Heart left ventricle (tissue), 16 donors: ENCODE measurements at regions of chr11 and their contacts with region 1.

Region 1: GRCh38 chr11:75142714-75143419 is 8.0 kb upstream of the SLCO2B1 start:
- DNase-seq: peak; percentile 75 to 88 (median 87)
- ATAC-seq: peak; percentile 78 to 95 (median 92)
- H3K4me3 ChIP-seq: no peak overlapping the region
- H3K27ac ChIP-seq: peak overlapping the region in 6 of 12 donors; percentile 15 to 83 (median 52)
- H3K4me1 ChIP-seq: peaks cover 0 to 52% (median 16%) of the 10 kb centered on the region in 12 donors
- H3K27me3 ChIP-seq: peaks cover 0 to 15% (median 0%) of the 10 kb centered on the region in 9 donors
- CTCF ChIP-seq: peak in 1 of 12 donors; percentile 9
- POLR2A ChIP-seq: no peak

Region 2: GRCh38 chr11:74929431-74930363 is 213.2 kb before region 1 on chr11:
- intact Hi-C with region 1: loop called in 6 of 10 experiments (anchors 5 to 10 kb)
- DNase-seq: peak in 4 of 5 donors; percentile 52 to 76 (median 61)
- ATAC-seq: peak; percentile 71 to 90 (median 88)
- H3K4me3 ChIP-seq: no peak overlapping the region
- H3K27ac ChIP-seq: no peak overlapping the region
- H3K4me1 ChIP-seq: no peaks in the 10 kb centered on the region
- H3K27me3 ChIP-seq: no peaks in the 10 kb centered on the region
- CTCF ChIP-seq: peak; percentile 70 to 89 (median 82)
- POLR2A ChIP-seq: no peak

Region 3: GRCh38 chr11:74956397-74957015 is 186.4 kb before region 1 on chr11:
- intact Hi-C with region 1: no loop called
- DNase-seq: peak in 1 of 5 donors; percentile 46
- ATAC-seq: peak; percentile 65 to 89 (median 84)
- H3K4me3 ChIP-seq: no peak overlapping the region
- H3K27ac ChIP-seq: peak overlapping the region in 3 of 12 donors; percentile 27 to 58 (median 48)
- H3K4me1 ChIP-seq: peaks cover 0 to 96% (median 52%) of the 10 kb centered on the region in 12 donors
- H3K27me3 ChIP-seq: no peaks in the 10 kb centered on the region
- CTCF ChIP-seq: no peak
- POLR2A ChIP-seq: no peak

Region 4: GRCh38 chr11:75160192-75160757 is 17.4 kb after region 1 on chr11:
- intact Hi-C with region 1: loop called in 1 of 10 experiments (anchors 1 kb)
- DNase-seq: peak in 3 of 5 donors; percentile 39 to 57 (median 47)
- ATAC-seq: peak; percentile 38 to 83 (median 47)
- H3K4me3 ChIP-seq: peak overlapping the region in 1 of 12 donors; percentile 10
- H3K27ac ChIP-seq: peak overlapping the region; percentile 32 to 93 (median 71)
- H3K4me1 ChIP-seq: peaks cover 0 to 86% (median 31%) of the 10 kb centered on the region in 12 donors
- H3K27me3 ChIP-seq: no peaks in the 10 kb centered on the region
- CTCF ChIP-seq: no peak
- POLR2A ChIP-seq: no peak

Region 5: DNA sequence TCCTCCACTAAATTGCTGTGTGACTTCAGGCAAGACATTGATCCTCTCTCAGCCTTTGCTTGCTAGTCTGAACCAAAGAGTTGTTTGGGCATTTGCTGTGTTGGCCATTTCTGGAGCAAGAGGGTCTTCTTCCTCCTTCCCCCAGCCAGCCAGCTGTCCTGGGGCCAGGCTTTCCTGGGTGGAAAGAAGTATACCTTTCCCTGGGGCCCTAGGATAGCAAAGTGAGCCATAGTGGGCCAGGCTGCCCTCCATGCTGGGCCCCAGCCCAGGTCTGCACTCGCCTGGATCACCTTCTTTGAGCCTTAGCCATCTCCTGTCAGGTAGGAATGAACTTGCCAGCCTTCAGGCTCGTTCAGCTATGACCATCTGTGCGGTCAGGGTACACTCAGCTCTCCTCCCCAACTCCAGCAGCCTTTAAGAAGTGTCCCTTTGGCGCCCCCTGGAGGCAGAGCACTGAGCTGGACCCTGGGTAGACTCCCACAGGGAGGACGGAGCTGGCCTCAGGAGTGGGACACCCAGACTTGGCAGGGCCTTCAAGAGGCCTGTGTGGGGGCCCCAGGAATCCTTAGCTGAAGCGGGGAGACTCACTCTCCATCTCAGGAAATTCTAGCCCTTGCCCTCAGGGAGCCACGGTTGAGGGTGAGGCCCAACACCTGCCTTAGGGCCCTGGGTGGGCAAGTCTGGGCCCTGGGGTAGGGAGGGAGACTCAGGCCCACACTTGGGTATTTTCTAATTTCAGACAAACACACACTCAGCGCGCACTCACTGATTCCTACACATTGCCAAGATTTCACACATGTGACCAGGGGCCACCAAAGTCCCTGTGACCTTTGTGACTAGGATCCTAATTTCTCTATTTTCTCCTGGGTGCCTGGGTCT is 62.1 kb after region 1 on chr11:
- intact Hi-C with region 1: loop called (anchors 1 to 2 kb)
- DNase-seq: peak; percentile 87 to 94 (median 88)
- ATAC-seq: peak; percentile 90 to 96 (median 95)
- H3K4me3 ChIP-seq: no peak overlapping the region
- H3K27ac ChIP-seq: peak overlapping the region in 1 of 12 donors; percentile 37
- H3K4me1 ChIP-seq: peaks cover 0 to 9% (median under 1%) of the 10 kb centered on the region in 12 donors
- H3K27me3 ChIP-seq: peaks cover 0 to 8% (median 0%) of the 10 kb centered on the region in 9 donors
- CTCF ChIP-seq: peak; percentile 87 to 97 (median 92)
- POLR2A ChIP-seq: no peak

Region 6: DNA sequence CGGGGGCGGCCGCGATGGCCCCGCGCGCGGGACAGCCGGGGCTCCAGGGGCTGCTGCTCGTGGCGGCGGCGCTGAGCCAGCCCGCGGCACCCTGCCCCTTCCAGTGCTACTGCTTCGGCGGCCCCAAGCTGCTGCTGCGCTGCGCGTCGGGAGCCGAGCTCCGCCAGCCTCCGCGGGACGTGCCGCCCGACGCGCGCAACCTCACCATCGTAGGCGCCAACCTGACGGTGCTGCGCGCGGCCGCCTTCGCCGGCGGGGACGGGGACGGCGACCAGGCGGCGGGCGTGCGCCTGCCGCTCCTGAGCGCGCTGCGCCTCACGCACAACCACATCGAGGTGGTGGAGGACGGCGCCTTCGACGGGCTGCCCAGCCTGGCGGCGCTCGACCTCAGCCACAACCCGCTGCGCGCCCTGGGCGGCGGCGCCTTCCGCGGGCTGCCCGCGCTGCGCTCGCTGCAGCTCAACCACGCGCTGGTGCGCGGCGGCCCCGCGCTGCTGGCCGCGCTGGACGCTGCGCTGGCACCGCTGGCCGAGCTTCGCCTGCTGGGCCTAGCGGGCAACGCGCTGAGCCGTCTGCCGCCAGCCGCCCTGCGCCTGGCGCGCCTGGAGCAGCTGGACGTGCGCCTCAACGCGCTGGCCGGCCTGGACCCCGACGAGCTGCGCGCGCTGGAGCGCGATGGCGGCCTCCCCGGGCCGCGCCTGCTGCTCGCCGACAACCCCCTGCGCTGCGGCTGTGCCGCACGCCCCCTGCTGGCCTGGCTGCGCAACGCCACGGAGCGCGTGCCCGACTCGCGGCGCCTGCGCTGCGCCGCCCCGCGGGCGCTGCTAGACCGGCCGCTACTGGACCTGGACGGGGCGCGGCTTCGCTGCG is 98.4 kb after region 1 on chr11:
- intact Hi-C with region 1: loop called in 3 of 10 experiments (anchors 2 to 5 kb)
- DNase-seq: peak; percentile 82 to 95 (median 84)
- ATAC-seq: peak; percentile 56 to 97 (median 92)
- H3K4me3 ChIP-seq: peak overlapping the region; percentile 7 to 60 (median 44)
- H3K27ac ChIP-seq: no peak overlapping the region
- H3K4me1 ChIP-seq: peaks cover 0 to 21% (median 5%) of the 10 kb centered on the region in 12 donors
- H3K27me3 ChIP-seq: peaks cover 21 to 59% (median 34%) of the 10 kb centered on the region in 9 donors
- CTCF ChIP-seq: peak; percentile 29 to 99 (median 88)
- POLR2A ChIP-seq: no peak

Region 7: GRCh38 chr11:75248690-75249268 is 105.9 kb after region 1 on chr11:
- intact Hi-C with region 1: loop called (anchors 1 to 5 kb)
- DNase-seq: peak; percentile 84 to 91 (median 87)
- ATAC-seq: peak; percentile 88 to 94 (median 92)
- H3K4me3 ChIP-seq: no peak overlapping the region
- H3K27ac ChIP-seq: no peak overlapping the region
- H3K4me1 ChIP-seq: peaks cover 0 to 3% (median 0%) of the 10 kb centered on the region in 12 donors
- H3K27me3 ChIP-seq: peaks cover 0 to 21% (median 5%) of the 10 kb centered on the region in 9 donors
- CTCF ChIP-seq: peak in 11 of 12 donors; percentile 95 to 100 (median 99)
- POLR2A ChIP-seq: no peak